Activated CD4-positive, alpha-beta T cell treated with anti-CD3 and anti-CD28 coated beads for 36 hours (primary cell): ENCODE measurements at regions of chr4 and their contacts with region 1.

Region 1: GRCh38 chr4:56435306-56435926 is at the start of gene PPAT:
- DNase-seq: peak; percentile 99
- ATAC-seq: peak; percentile 78
- H3K4me3 Mint-ChIP-seq: peak within 1 kb of the TSS; percentile 88
- H3K27ac Mint-ChIP-seq: peak within 1 kb of the TSS; percentile 97
- H3K4me1 Mint-ChIP-seq: peaks cover 50% of the 10 kb centered on the region
- H3K27me3 Mint-ChIP-seq: no peaks in the 10 kb centered on the region
- total RNA-seq, gene PPAT: 36.8 to 48.2 TPM

Region 2: DNA sequence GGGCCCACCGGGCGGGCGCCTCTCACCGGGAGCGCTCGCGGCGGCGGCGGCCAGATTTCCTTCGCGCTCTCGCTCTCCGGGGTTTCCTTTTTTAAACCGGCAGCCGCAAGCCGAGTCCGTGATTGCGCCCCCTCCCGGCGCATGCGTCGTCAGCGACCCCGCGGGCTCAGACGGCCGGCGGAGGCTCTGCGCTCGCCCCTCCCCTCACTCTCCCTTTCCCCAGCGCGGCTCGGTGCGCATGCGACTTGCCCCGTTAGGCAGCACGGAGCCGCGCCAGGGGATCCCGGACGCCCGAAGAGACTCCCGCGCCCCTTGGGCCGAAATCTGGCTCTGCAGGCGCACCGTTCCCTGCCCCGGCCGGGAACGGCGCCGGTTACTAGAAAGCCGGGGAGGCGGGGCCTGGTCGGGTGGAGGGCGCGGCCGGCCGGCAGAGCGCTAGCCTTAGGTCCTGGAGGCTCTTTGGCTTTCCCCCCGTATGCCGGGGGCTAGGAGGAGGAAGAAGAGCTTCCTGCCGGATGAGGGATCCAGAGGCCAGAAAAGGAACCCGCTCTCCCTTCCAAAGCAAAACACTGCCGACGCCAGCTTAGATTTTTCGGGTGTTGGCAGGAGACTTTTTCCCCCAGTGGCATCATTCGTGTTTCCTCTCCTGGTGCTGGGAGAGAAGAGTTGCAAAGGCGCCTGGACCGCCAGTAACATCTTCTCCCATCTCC is 888.5 kb before region 1 on chr4 and contains the start of gene CLOCK:
- CTCF ChIA-PET with region 1: no interaction called
- POLR2A ChIA-PET with region 1: no interaction called
- intact Hi-C with region 1: loop called in 1 of 2 experiments (anchors 2 kb)
- DNase-seq: peak; percentile 90
- ATAC-seq: peak; percentile 77
- H3K4me3 Mint-ChIP-seq: peak within 1 kb of the TSS; percentile 90
- H3K27ac Mint-ChIP-seq: peak within 1 kb of the TSS; percentile 86
- H3K4me1 Mint-ChIP-seq: peaks cover 46% of the 10 kb centered on the region
- H3K27me3 Mint-ChIP-seq: peaks cover 7% of the 10 kb centered on the region
- total RNA-seq, gene CLOCK: 10.4 to 13.3 TPM

Region 3: DNA sequence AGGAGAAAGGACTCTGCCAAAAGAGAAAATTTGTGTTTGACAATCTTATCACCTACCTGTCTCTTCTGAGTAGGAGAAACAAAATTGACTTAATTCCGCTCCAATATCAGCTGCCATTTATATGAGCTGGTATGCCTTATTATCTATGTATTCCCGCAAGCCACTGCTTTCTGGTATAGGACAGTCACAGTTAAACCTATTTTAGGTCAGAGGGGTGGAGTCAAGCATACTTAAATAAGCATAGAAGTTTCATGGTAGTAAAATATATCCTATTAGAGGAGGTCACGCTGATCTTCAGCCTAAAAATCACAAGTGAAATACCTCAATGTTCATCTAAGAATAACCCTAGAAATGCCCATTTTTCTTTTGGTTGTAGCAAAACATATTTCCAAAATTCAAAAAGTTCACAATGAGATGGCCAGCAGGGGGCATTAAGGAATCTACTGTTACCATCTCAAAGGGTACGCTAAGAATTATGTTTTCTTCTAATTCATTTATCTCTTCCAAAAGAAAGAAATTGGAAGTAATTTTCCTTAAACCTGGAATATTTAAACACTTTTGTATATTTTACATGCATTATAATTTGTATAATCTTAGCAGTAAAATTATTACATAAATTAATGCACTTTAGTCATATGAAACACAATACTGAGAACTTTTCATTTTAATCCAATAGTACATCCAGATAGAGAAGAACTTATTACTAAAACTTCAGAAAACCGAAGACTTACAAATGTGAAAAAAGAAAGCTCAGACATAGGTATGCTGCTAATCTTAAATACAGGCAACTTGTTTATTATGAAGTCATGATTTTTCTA is 10.5 kb before region 1 on chr4:
- CTCF ChIA-PET with region 1: interaction called, 10 read pairs
- POLR2A ChIA-PET with region 1: interaction called, 5 read pairs
- intact Hi-C with region 1: no loop called
- DNase-seq: peak; percentile 39
- ATAC-seq: no peak
- H3K4me3 Mint-ChIP-seq: no peak overlapping the region
- H3K27ac Mint-ChIP-seq: no peak overlapping the region
- H3K4me1 Mint-ChIP-seq: peaks cover 24% of the 10 kb centered on the region
- H3K27me3 Mint-ChIP-seq: no peaks in the 10 kb centered on the region

Region 4: GRCh38 chr4:56467284-56468096 is 32.1 kb after region 1 on chr4 and contains the start of gene SRP72:
- CTCF ChIA-PET with region 1: interaction called, 6 read pairs
- POLR2A ChIA-PET with region 1: interaction called, 11 read pairs
- intact Hi-C with region 1: loop called (anchors 1 kb)
- DNase-seq: peak; percentile 94
- ATAC-seq: peak; percentile 92
- H3K4me3 Mint-ChIP-seq: peak within 1 kb of the TSS; percentile 100
- H3K27ac Mint-ChIP-seq: peak within 1 kb of the TSS; percentile 99
- H3K4me1 Mint-ChIP-seq: peaks cover 50% of the 10 kb centered on the region
- H3K27me3 Mint-ChIP-seq: no peaks in the 10 kb centered on the region
- total RNA-seq, gene SRP72: 181 to 204 TPM

Region 5: DNA sequence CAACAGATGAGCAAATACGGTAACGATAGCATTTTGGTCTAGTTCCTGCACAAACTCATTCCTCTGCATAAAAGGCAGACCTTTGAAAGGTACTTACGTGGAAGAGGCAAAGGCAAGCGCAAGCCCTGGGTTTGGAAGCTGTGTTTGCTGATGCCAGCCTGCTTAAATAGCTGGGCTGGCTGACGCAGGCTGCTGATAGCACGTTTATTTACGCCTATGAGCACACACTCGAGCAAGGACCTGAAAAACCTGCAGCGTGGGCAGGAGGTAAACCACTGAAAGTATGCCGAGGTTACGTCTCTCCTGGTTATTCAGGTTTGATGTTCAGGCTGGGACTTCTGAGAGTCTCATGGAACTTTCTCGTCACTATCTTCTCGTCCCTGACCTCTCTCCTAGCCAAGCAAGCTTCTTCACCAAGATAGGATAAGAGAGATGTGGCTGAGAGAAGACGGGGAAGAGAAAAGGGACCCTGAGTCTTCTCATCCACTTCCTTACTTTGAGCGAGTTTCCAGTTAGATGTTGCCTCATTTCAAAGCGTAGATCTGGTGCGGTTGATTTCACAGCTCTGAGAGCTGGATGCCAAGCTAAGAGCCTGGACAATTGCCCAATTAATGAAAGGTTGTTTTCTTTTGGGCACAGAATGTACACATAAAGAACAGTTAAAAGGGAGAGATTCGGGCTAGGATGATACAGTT is 245.9 kb after region 1 on chr4 and contains the start of gene HOPX:
- CTCF ChIA-PET with region 1: interaction called, 3 read pairs
- POLR2A ChIA-PET with region 1: no interaction called
- intact Hi-C with region 1: loop called in 1 of 2 experiments (anchors 1 kb)
- DNase-seq: peak; percentile 90
- ATAC-seq: peak; percentile 84
- H3K4me3 Mint-ChIP-seq: peak within 1 kb of the TSS; percentile 51
- H3K27ac Mint-ChIP-seq: peak within 1 kb of the TSS; percentile 61
- H3K4me1 Mint-ChIP-seq: peaks cover 34% of the 10 kb centered on the region
- H3K27me3 Mint-ChIP-seq: peaks cover 28% of the 10 kb centered on the region
- total RNA-seq, gene HOPX: 56.3 to 83.9 TPM

Region 6: GRCh38 chr4:56977321-56978012 is 542.1 kb after region 1 on chr4 and contains the start of gene NOA1:
- CTCF ChIA-PET with region 1: interaction called, 5 read pairs
- POLR2A ChIA-PET with region 1: interaction called, 28 read pairs
- intact Hi-C with region 1: loop called (anchors 1 kb)
- DNase-seq: peak; percentile 98
- ATAC-seq: peak; percentile 84
- H3K4me3 Mint-ChIP-seq: peak within 1 kb of the TSS; percentile 88
- H3K27ac Mint-ChIP-seq: peak within 1 kb of the TSS; percentile 97
- H3K4me1 Mint-ChIP-seq: peaks cover 51% of the 10 kb centered on the region
- H3K27me3 Mint-ChIP-seq: no peaks in the 10 kb centered on the region
- total RNA-seq, gene NOA1: 24.9 to 31.5 TPM